Activated CD4-positive, alpha-beta T cell treated with anti-CD3 and anti-CD28 coated beads, Interleukin-2, amount 10 ng/mL, durations not matched to agents 24 days and 14 days (primary cell): ENCODE measurements at regions of chr5 and their contacts with region 1.

Region 1: DNA sequence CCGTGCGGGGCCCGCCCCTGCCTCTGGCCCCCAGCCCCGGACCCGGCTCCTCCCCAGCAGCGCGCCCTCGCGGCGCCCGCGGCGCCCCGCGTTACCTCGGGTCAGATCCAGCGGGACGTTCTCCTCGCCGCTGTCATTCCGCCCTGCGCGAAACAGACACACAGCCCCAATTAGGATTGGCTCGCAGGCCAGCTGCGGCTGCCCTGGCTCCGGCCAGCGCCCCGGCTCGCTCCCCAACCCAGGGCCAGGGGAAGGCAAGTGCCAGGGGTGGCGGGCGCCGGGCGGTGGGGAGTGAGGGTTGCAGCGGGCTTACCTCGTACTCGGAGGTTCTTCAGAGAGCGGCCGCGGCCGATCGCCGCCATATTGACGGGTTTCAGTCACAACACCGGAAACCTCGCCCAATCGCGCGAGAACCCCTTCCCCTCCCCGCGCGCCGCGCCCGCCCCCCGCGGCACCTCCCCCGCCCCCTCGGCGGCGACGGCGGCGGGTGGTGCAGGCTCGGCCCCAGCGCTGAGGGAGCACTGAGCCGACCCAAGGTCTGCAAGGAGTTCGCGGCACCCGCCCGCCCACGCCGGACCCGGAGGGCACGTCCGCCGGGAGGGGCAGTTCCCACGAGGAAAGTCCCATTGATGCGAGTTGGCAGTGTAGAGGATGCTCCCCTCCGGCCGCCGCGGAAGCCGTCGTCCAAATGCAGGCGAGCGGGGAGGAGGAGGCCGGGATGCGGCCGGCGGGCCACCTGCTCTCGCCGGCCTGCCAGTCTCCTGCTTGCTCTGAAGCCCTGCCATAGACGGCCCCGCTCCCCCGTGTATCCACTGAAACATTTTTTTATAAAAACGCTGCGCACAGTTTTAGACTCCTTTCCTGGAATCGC is at the start of gene RICTOR:
- DNase-seq: peak; percentile 97
- H3K4me3 Mint-ChIP-seq: peak within 1 kb of the TSS; percentile 98
- H3K27ac Mint-ChIP-seq: peak within 1 kb of the TSS; percentile 98
- H3K4me1 Mint-ChIP-seq: peaks cover 36% of the 10 kb centered on the region
- H3K27me3 Mint-ChIP-seq: peaks cover 8% of the 10 kb centered on the region
- total RNA-seq, gene RICTOR: 31.1 and 34.2 TPM in 2 replicates

Region 2: GRCh38 chr5:37370864-37371726 is 1703.2 kb before region 1 on chr5 and contains the start of gene NUP155:
- intact Hi-C with region 1: loop called (anchors 5 kb)
- DNase-seq: peak; percentile 97
- H3K4me3 Mint-ChIP-seq: peak within 1 kb of the TSS; percentile 91
- H3K27ac Mint-ChIP-seq: peak within 1 kb of the TSS; percentile 95
- H3K4me1 Mint-ChIP-seq: peaks cover 23% of the 10 kb centered on the region
- H3K27me3 Mint-ChIP-seq: no peaks in the 10 kb centered on the region
- total RNA-seq, gene NUP155: 85.1 and 86.2 TPM in 2 replicates

Region 3: GRCh38 chr5:39005566-39006232 is 68.6 kb before region 1 on chr5:
- intact Hi-C with region 1: loop called (anchors 5 kb)
- DNase-seq: no peak
- H3K4me3 Mint-ChIP-seq: no peak overlapping the region
- H3K27ac Mint-ChIP-seq: no peak overlapping the region
- H3K4me1 Mint-ChIP-seq: peaks cover 15% of the 10 kb centered on the region
- H3K27me3 Mint-ChIP-seq: no peaks in the 10 kb centered on the region

Region 4: GRCh38 chr5:39058178-39058921 is 15.9 kb before region 1 on chr5:
- intact Hi-C with region 1: loop called (anchors 2 kb)
- DNase-seq: no peak
- H3K4me3 Mint-ChIP-seq: peak overlapping the region; percentile 64
- H3K27ac Mint-ChIP-seq: peak overlapping the region; percentile 45
- H3K4me1 Mint-ChIP-seq: peaks cover 39% of the 10 kb centered on the region
- H3K27me3 Mint-ChIP-seq: no peaks in the 10 kb centered on the region

Region 5: DNA sequence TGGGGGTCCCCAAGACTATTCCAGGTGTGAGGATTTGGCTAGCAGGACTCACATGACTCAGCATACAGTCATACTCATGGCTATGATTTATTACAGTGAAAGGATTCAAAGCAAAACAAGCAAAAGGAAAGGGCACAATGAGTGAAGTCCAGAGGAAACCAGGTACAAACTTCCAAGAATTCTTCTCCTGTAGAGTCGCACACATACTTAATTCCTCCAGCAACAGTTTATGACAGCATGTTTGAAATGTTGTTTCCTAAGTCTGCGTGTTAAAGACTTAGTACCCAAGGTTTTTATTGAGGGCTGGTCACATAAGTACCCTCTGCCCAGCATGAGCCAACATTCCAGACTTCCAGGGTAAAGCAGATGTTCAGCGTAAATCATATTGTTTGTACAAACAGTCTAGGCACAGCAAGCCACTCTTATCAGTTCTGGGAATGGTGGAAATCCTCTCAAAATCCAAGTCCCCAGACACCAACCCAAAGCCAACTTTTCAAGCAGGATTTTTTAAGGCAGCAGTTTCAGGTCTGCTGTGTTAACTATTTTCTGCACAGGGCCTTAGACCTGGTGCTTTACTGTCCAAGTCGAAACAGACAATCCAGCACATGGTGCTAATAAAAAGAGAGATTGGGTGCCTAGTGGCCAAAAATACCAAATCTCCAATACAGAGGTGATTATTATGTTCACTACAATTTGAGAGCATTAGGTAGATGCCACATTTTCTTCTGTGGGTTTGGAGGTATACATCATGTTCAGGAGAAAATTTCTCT is 18.5 kb after region 1 on chr5:
- intact Hi-C with region 1: no loop called
- DNase-seq: no peak
- H3K4me3 Mint-ChIP-seq: no peak overlapping the region
- H3K27ac Mint-ChIP-seq: no peak overlapping the region
- H3K4me1 Mint-ChIP-seq: no peaks in the 10 kb centered on the region
- H3K27me3 Mint-ChIP-seq: peaks cover 25% of the 10 kb centered on the region

Region 6: DNA sequence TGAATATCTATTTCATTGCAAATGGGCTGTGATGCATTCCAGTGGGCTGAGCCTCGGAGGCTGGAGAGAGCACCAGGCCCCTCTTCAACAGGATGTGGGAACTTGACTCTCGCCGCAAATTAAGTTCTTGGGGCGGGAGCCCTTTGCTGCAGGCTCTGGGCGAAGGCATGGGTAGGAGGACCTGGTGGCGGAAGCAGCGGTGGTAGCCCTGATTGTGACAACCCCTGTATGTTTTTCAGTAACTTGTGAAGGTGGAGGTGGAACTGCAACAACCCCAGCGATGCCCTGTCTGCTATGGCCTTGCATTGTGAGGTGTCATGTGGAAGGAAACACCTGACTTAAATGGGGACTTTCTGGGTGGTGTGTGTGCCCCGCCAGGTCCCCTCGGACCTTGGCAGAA is 135.7 kb after region 1 on chr5:
- intact Hi-C with region 1: loop called (anchors 2 kb)
- DNase-seq: peak; percentile 95
- H3K4me3 Mint-ChIP-seq: peak overlapping the region; percentile 75
- H3K27ac Mint-ChIP-seq: peak overlapping the region; percentile 92
- H3K4me1 Mint-ChIP-seq: peaks cover 79% of the 10 kb centered on the region
- H3K27me3 Mint-ChIP-seq: no peaks in the 10 kb centered on the region

Region 7: GRCh38 chr5:39274398-39275085 is 200.3 kb after region 1 on chr5:
- intact Hi-C with region 1: loop called (anchors 10 kb)
- DNase-seq: peak; percentile 71
- H3K4me3 Mint-ChIP-seq: peak overlapping the region; percentile 80
- H3K27ac Mint-ChIP-seq: peak overlapping the region; percentile 93
- H3K4me1 Mint-ChIP-seq: peaks cover 26% of the 10 kb centered on the region
- H3K27me3 Mint-ChIP-seq: no peaks in the 10 kb centered on the region